ENCODE measurements at regions of chr16 and their contacts with region 1.

Region 1: GRCh38 chr16:89867918-89868317 is 5.5 kb upstream of the TCF25 start:
- DNase-seq: no peak
- H3K4me3 ChIP-seq: no peak overlapping the region
- H3K27ac ChIP-seq: no peak overlapping the region
- H3K4me1 ChIP-seq: peaks cover 15 to 24% (median 17%) of the 10 kb centered on the region in 4 donors
- H3K27me3 ChIP-seq: no peaks in the 10 kb centered on the region
- CTCF ChIP-seq: no peak
- EP300 ChIP-seq: no peak
- POLR2A ChIP-seq: no peak

Region 2: GRCh38 chr16:89720813-89721545 is 146.9 kb before region 1 on chr16 and contains the starts of genes VPS9D1 and ZNF276:
- intact Hi-C with region 1: loop called (anchors 5 kb)
- DNase-seq: peak; percentile 93
- H3K4me3 ChIP-seq: peak within 1 kb of the TSS; percentile 92 to 99 (median 94)
- H3K27ac ChIP-seq: peak within 1 kb of the TSS; percentile 98 to 99 (median 99)
- H3K4me1 ChIP-seq: peaks cover 35 to 53% (median 44%) of the 10 kb centered on the region in 4 donors
- H3K27me3 ChIP-seq: no peaks in the 10 kb centered on the region
- CTCF ChIP-seq: peak in 1 of 3 experiments; percentile 3
- EP300 ChIP-seq: no peak
- POLR2A ChIP-seq: peak; percentile 37
- total RNA-seq, gene VPS9D1: 4.6 to 10.2 (median 7.1) TPM
- total RNA-seq, gene ZNF276: 16.1 to 19.2 (median 17.2) TPM

Measured in esophagus muscularis mucosa (tissue), 4 donors.